ENCODE measurements at regions of chr1 and their contacts with region 1.

Region 1: DNA sequence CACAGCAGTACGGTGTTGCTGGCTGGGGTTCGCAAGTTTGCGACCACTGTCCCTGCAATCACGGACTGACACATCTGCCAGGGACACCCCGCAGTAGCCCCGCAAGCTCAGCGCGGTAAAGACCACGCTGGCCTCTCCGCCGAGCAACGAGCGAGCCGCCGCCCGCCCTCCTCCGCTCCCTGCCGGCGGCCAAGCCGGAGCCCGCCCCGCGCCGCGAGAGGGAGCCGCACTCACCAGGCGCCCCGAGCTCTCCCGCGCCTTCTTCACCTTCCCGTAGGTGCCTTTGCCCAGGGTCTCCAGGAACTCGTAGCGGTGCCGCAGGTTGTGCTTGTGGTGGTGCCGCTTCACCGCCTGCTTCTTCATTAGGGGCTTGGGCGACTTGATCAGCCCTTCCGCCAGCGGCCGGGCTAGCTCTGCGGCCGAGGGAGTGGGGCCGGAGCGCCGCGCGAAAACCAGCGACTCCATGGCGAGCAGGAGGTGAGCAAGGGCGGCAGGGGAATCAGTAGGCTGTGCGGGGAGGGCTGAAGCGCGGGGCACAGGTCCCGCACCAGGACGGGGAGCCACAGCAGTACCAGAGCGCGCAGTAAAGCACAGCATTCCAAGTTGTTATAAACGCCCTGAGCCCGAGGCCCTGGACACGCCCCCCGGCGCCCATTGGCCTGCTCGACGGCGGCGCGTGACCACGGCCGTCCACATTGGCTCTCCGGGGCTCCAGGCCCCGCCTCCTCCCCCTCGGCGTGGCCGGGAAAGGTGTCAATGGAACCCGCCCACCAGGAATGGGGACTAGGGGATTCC is at the start of gene NUAK2:
- DNase-seq: peak; percentile 97
- H3K4me3 Mint-ChIP-seq: peak within 1 kb of the TSS; percentile 99
- H3K27ac Mint-ChIP-seq: peak within 1 kb of the TSS; percentile 54
- H3K4me1 Mint-ChIP-seq: peaks cover 56% of the 10 kb centered on the region
- H3K27me3 Mint-ChIP-seq: no peaks in the 10 kb centered on the region
- CTCF ChIP-seq: peak; percentile 64
- total RNA-seq, gene NUAK2: 2.8 and 6.0 TPM in 2 replicates

Region 2: GRCh38 chr1:205263580-205264190 is 57.7 kb before region 1 on chr1:
- CTCF ChIA-PET with region 1: interaction called, 1,857 read pairs
- POLR2A ChIA-PET with region 1: interaction called, 15 read pairs
- intact Hi-C with region 1: no loop called
- DNase-seq: no peak
- H3K4me3 Mint-ChIP-seq: no peak overlapping the region
- H3K27ac Mint-ChIP-seq: no peak overlapping the region
- H3K4me1 Mint-ChIP-seq: peaks cover 30% of the 10 kb centered on the region
- H3K27me3 Mint-ChIP-seq: no peaks in the 10 kb centered on the region
- CTCF ChIP-seq: no peak

Region 3: GRCh38 chr1:205284343-205285144 is 36.8 kb before region 1 on chr1:
- CTCF ChIA-PET with region 1: interaction called, 1,857 read pairs
- POLR2A ChIA-PET with region 1: interaction called, 335 read pairs
- intact Hi-C with region 1: loop called (anchors 1 kb)
- DNase-seq: peak; percentile 100
- H3K4me3 Mint-ChIP-seq: peak overlapping the region; percentile 24
- H3K27ac Mint-ChIP-seq: peak overlapping the region; percentile 96
- H3K4me1 Mint-ChIP-seq: peaks cover 75% of the 10 kb centered on the region
- H3K27me3 Mint-ChIP-seq: no peaks in the 10 kb centered on the region
- CTCF ChIP-seq: no peak

Region 4: DNA sequence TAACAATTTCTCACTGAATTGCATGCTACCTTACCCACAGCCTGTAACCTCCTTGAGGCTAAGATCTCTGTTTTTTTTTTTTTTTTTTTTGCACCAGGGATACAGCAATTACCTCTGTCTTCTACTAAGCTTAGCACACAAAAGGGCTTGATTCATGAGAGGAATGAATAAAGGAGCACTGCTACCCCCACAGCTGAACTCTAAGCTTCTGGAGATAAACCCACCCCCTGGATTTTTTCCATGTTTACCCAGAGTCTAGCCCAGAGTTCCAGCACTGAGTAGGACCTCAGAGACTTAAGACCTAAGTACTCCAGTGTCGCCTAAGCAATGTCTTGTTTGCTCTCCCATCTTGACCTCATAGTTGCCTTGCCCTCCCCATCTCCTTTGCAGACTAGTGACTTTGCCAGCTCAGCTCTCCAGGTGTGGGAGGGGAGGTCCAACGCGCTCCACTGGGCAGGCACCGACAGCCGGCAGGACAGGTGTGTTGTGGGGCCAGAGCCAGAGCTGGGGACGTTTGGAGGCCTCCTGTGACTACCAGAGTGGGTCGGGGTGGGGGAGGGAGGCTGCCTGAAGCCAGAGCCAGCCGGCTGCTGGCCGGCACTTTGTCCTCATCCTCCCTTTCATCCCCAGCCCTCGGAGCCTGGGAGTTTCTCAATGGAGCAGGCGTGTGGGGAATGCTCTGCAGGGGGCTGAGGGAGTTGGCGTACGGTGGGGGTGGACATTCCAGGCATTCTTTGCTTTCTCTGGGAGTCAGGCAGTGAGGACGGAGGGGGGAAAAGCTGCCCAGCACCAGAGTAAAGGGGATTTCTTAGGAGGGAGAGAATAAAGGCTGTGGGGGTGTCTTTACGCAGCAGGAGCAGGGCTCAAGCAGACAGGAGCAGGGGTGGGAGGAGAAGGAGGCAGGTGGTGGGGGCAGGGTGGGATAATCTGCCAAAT is 20.2 kb before region 1 on chr1:
- CTCF ChIA-PET with region 1: interaction called, 197 read pairs
- POLR2A ChIA-PET with region 1: interaction called, 243 read pairs
- intact Hi-C with region 1: loop called (anchors 2 kb)
- DNase-seq: peak; percentile 91
- H3K4me3 Mint-ChIP-seq: no peak overlapping the region
- H3K27ac Mint-ChIP-seq: peak overlapping the region; percentile 23
- H3K4me1 Mint-ChIP-seq: peaks cover 48% of the 10 kb centered on the region
- H3K27me3 Mint-ChIP-seq: no peaks in the 10 kb centered on the region
- CTCF ChIP-seq: no peak

Region 5: DNA sequence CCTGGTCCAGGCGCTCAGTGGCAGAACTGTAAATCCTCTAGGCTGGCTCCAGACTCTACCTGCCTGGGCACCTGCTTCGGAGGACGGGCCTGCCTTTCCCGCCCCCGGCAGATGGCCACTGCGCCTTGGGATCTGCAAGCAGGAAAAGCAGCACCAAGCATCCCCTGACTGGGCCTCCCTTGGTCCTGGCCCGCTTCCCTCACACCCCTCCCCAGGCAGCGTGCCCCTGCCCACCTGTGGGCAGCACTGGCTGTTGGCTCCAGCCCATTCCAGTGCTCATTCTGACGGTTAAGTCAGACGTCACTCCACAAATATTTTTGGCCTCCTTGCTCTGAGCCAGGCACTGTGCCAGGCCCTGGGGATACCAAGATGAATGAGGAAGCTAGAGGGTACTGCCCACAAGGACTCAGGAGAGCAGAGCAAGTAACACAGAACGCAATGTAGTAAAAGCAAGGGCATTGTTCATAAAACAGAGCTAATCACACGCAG is 156.4 kb after region 1 on chr1:
- CTCF ChIA-PET with region 1: interaction called, 10 read pairs
- POLR2A ChIA-PET with region 1: interaction called, 4 read pairs
- intact Hi-C with region 1: no loop called
- DNase-seq: peak; percentile 100
- H3K4me3 Mint-ChIP-seq: no peak overlapping the region
- H3K27ac Mint-ChIP-seq: peak overlapping the region; percentile 33
- H3K4me1 Mint-ChIP-seq: peaks cover 15% of the 10 kb centered on the region
- H3K27me3 Mint-ChIP-seq: peaks cover 40% of the 10 kb centered on the region
- CTCF ChIP-seq: no peak